SK-N-SH (cell line): ENCODE measurements at regions of chr18 and their contacts with region 1.

Region 1: GRCh38 chr18:59402432-59403090 is 43.5 kb upstream of the LMAN1 start:
- DNase-seq: peak; percentile 88
- H3K4me3 ChIP-seq: peak overlapping the region in 1 of 2 experiments; percentile 57; a peak in 1 of 4 replicates
- H3K27ac ChIP-seq: no peak overlapping the region
- H3K4me1 ChIP-seq: no peaks in the 10 kb centered on the region; a peak in 1 of 4 replicates
- H3K27me3 ChIP-seq: no peaks in the 10 kb centered on the region
- CTCF ChIP-seq: peak; percentile 94
- EP300 ChIP-seq: no peak
- RAD21 ChIP-seq: peak; percentile 99

Region 2: DNA sequence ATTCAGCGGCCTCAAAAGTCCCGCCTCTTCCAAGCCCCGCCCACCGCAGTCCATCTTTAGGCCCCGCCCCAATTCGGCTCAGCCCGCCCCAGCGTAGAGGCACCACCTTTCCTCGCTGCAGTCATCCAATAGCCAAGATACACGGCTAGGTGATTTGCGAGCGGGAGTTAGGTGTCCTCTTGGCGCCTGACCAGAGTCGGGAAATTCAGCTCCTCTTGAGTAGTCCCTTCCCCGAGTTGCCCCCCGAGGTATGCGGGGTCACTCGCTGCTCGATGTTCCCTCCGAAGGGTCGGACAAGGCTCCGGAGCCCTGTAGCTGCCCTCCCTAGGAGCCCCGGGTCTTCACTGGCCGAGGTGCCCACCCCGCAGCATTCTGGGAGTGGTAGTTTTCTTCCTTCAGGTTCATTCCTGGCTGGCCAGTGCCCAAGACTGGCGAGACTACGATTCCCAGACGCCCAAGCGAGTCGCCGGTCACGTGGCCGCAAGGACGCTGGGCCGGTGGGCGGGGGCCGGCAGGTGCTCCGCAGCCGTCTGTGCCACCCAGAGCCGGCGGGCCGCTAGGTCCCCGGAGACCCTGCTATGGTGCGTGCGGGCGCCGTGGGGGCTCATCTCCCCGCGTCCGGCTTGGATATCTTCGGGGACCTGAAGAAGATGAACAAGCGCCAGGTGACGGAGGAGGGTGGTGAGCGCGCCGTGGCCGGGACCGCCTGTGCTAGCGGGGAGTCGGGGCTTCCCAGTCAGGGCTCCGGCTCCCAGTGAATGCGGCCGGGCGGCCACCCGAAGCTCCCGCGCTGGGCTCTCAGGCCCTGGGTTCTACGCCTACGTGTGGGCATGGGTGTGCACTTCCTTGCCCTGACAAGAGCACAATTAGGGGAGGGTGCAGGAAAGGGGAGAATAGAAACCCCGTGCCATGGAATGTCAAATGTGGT is 262.9 kb before region 1 on chr18 and contains the start of gene SEC11C:
- CTCF ChIA-PET with region 1: interaction called, 10 read pairs
- POLR2A ChIA-PET with region 1: no interaction called
- DNase-seq: peak; percentile 95
- H3K4me3 ChIP-seq: peak within 1 kb of the TSS; percentile 85 to 94
- H3K27ac ChIP-seq: peak within 1 kb of the TSS; percentile 60 to 95
- H3K4me1 ChIP-seq: peaks cover 9 to 11% of the 10 kb centered on the region in 2 experiments; a peak in 3 of 4 replicates
- H3K27me3 ChIP-seq: peaks cover 15% of the 10 kb centered on the region; the same call in 1 of the 2 replicates
- CTCF ChIP-seq: no peak
- EP300 ChIP-seq: no peak
- RAD21 ChIP-seq: no peak
- polyA plus RNA-seq, gene SEC11C: 19.0 and 21.7 TPM in 2 replicates

Region 3: GRCh38 chr18:59268721-59269562 is 133.6 kb before region 1 on chr18:
- CTCF ChIA-PET with region 1: interaction called, 28 read pairs
- POLR2A ChIA-PET with region 1: no interaction called
- DNase-seq: peak; percentile 93
- H3K4me3 ChIP-seq: peak overlapping the region in 1 of 2 experiments; percentile 38; a peak in 3 of 4 replicates
- H3K27ac ChIP-seq: no peak overlapping the region
- H3K4me1 ChIP-seq: peaks cover 4 to 12% of the 10 kb centered on the region in 2 experiments; a peak in 2 of 4 replicates
- H3K27me3 ChIP-seq: peaks cover 98% of the 10 kb centered on the region
- CTCF ChIP-seq: no peak; the same call in none of the 2 replicates
- EP300 ChIP-seq: no peak
- RAD21 ChIP-seq: no peak; the same call in 1 of the 2 replicates

Region 4: GRCh38 chr18:59318460-59319050 is 84.0 kb before region 1 on chr18 and contains the start of gene CPLX4:
- CTCF ChIA-PET with region 1: interaction called, 168 read pairs
- POLR2A ChIA-PET with region 1: no interaction called
- DNase-seq: no peak
- H3K4me3 ChIP-seq: no peak within 1 kb of the TSS
- H3K27ac ChIP-seq: no peak within 1 kb of the TSS
- H3K4me1 ChIP-seq: no peaks in the 10 kb centered on the region
- H3K27me3 ChIP-seq: no peaks in the 10 kb centered on the region
- CTCF ChIP-seq: no peak
- EP300 ChIP-seq: no peak
- RAD21 ChIP-seq: no peak
- polyA plus RNA-seq, gene CPLX4: not detected in 2 replicates

Region 5: DNA sequence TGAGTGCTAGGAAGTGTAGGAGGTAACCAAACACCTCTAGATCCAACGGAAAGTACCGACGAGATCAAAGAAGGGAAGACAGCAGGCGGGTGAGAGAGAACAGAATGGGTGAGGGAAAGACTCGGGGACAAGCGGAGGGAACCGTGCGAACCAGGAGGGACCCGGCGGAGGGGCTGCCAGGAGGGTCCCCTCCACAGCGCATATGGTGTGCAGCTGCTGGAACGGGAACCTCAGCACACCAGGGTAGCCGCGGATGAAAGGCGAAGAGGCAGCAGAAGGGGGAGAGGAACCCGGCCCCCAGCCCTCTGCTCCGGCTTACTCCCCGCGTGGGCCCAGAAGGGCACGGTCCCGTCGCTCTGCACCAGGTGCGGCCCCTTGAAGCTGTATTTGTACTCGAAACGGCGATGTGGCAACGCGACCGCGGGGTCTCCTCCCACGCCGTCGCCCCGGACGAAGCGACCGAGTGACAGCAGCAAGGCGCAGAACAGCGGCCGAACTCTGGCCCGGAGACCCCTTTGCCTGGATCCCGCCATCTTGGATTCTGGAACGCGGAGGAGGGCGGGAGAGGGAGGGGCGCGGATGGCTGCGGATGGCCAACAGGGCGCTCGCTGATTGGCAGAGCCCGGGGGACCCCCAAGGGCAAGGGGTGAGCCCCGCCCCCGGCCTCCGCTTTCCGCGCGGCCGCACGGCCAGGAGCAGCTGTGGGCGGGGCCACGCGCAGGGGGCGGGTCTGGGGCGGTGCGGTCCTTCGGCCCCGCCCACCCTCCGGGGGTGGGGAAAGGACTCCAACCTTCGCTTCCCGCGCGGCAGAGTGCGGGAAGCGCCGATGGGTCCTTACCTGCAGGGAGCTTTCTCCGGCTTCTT is 43.6 kb before region 1 on chr18 and contains the start of gene LMAN1:
- CTCF ChIA-PET with region 1: interaction called, 11 read pairs
- POLR2A ChIA-PET with region 1: no interaction called
- DNase-seq: peak; percentile 98
- H3K4me3 ChIP-seq: peak within 1 kb of the TSS; percentile 87 to 89
- H3K27ac ChIP-seq: peak within 1 kb of the TSS; percentile 70 to 80; a peak in 3 of 4 replicates
- H3K4me1 ChIP-seq: peaks cover 9 to 11% of the 10 kb centered on the region in 2 experiments; a peak in 3 of 4 replicates
- H3K27me3 ChIP-seq: no peaks in the 10 kb centered on the region
- CTCF ChIP-seq: no peak
- EP300 ChIP-seq: no peak
- RAD21 ChIP-seq: no peak
- polyA plus RNA-seq, gene LMAN1: 43.4 and 56.5 TPM in 2 replicates

Region 6: DNA sequence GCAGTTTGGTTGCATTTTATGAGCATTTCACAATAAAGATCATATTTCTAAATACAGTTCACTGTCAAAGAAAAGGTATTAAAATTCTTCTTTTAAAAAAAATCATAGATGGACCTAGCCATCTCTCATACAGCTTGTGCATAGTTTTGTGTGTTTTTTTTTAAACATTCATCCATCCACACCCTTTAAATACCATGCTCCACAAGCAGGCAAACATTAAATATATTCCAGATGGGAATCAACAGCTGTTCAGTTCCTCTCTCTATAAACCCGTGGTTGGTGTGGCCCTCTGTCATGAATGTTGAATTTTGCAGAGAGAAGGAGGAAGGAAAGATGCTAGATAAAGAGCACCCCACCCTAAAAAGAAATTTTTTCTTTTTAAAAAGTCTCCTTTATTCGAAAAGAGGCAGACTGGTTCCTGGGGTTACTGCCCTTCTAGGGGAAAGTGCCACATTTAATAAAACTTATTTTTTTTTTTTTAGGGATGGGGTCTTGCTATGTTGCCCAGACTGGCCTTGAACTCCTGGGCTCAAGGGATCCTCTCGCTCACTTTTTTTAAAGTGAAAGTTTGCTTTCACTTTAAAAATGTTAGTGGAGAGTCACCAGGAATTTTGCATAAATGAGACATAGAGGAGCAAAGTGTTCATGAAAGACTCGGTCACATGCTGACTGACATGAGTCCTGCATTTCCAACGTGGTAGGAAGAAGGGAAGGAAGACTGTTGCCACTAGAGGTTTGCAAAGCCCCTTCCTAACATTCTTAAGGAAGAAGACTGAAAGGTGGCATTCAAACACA is 30.4 kb after region 1 on chr18:
- CTCF ChIA-PET with region 1: interaction called, 16 read pairs
- POLR2A ChIA-PET with region 1: no interaction called
- DNase-seq: no peak
- H3K4me3 ChIP-seq: no peak overlapping the region
- H3K27ac ChIP-seq: no peak overlapping the region
- H3K4me1 ChIP-seq: peaks cover 0 to 5% of the 10 kb centered on the region in 2 experiments; a peak in 1 of 4 replicates
- H3K27me3 ChIP-seq: no peaks in the 10 kb centered on the region
- CTCF ChIP-seq: no peak
- EP300 ChIP-seq: no peak
- RAD21 ChIP-seq: no peak

Region 7: GRCh38 chr18:59885579-59886163 is 483.1 kb after region 1 on chr18:
- CTCF ChIA-PET with region 1: no interaction called
- POLR2A ChIA-PET with region 1: no interaction called
- DNase-seq: no peak
- H3K4me3 ChIP-seq: peak overlapping the region; percentile 29 to 48; a peak in 3 of 4 replicates
- H3K27ac ChIP-seq: peak overlapping the region; percentile 77 to 100
- H3K4me1 ChIP-seq: peaks cover 2 to 25% of the 10 kb centered on the region in 2 experiments; a peak in 3 of 4 replicates
- H3K27me3 ChIP-seq: no peaks in the 10 kb centered on the region
- CTCF ChIP-seq: no peak
- EP300 ChIP-seq: peak; percentile 34 to 77; a peak in 2 of 4 replicates
- RAD21 ChIP-seq: no peak